ENCODE measurements at regions of chr17 and their contacts with region 1.

Region 1: DNA sequence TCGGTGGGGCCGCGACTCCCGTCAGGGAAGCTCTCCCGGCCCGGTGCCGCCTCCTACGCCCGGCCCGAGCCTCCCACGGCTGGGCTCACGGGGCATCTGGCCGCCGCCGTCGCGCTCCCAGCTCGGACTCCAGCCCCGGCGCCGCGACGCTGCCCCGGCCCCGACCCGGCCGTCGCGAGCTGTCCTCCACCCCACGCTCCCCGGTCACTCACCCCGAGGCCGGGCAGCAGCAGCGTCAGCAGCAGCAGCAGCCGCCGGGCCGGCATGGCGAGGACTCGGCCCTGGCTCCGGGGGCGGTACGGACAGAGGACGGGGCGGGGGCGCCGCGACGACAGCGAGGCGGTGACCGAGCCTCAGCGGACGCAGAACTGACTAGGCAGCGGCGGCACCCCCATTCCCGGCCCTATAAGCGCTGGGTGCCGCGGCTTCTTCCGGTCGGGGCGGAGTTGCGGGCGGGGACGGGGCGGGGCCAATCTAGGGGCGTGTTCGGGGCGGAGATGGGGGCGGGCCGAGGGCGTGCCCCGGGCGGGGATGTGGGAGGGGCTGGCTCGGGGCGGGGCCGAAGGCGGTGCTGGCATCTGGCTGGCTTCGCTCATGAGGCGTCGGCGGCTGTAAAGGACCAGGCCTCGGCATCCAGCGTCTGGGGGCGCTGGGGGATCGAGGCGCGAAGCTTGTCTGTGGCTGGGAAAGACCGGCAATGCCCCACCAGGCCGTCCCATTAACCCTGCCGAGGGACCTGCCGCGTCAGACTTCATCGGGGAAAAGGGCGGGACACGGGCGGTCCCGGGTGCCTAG is at the start of gene ERN1:
- DNase-seq: peak; percentile 87 to 95 (median 88)
- H3K4me3 ChIP-seq: peak within 1 kb of the TSS; percentile 92
- H3K4me3 Mint-ChIP-seq: peak within 1 kb of the TSS; percentile 91 to 98 (median 97)
- H3K27ac ChIP-seq: peak within 1 kb of the TSS; percentile 82
- H3K27ac Mint-ChIP-seq: peak within 1 kb of the TSS; percentile 92 to 98 (median 98)
- H3K4me1 ChIP-seq: peaks cover 32% of the 10 kb centered on the region
- H3K4me1 Mint-ChIP-seq: peaks cover 48 to 63% (median 59%) of the 10 kb centered on the region in 3 donors
- H3K27me3 ChIP-seq: no peaks in the 10 kb centered on the region
- H3K27me3 Mint-ChIP-seq: no peaks in the 10 kb centered on the region
- total RNA-seq, gene ERN1: 24.7 to 25.5 TPM

Region 2: DNA sequence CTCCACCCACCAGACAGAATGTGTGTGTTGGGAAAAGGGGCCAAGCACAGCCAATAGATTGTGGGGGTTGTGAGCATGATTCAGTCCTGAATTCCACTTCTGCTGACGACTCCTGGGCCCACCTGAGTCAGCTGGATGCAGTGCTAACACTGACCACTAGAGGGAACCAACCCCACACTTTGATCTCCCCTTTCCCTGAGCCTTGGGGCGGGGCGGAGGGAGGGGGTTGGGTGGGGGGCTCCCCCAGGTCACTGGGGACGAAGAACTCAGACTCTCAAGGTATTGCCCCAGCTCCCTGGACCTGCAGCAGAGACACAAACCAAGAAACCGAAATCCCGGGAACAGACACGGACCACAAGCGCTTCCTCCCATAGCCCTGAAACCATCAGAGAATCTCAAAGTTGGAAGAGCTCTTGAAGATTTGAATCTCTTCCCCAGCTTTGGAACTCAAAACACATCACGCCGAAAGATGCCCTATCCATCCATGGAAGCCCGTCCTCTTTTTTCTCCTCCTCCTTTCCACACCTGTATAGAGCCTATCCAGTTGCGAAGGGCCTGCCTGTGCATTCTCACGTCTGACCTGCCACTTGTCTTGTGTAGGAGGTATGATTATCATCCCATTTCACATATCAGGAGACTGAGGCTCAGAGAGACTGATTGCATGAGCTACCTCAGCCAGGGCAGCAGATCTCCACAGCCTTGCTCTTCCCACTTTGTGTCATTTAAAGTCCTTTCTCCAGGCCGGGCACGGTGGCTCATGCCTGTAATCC is 218.1 kb before region 1 on chr17:
- CTCF ChIA-PET with region 1: interaction called, 35 read pairs
- POLR2A ChIA-PET with region 1: no interaction called
- DNase-seq: peak; percentile 51 to 75 (median 58)
- H3K4me3 ChIP-seq: no peak overlapping the region
- H3K4me3 Mint-ChIP-seq: no peak overlapping the region
- H3K27ac ChIP-seq: no peak overlapping the region
- H3K27ac Mint-ChIP-seq: peak overlapping the region in 2 of 8 donors; percentile 17 to 47
- H3K4me1 ChIP-seq: no peaks in the 10 kb centered on the region
- H3K4me1 Mint-ChIP-seq: peaks cover 0 to 2% (median 0%) of the 10 kb centered on the region in 3 donors
- H3K27me3 ChIP-seq: no peaks in the 10 kb centered on the region
- H3K27me3 Mint-ChIP-seq: peaks cover 0 to 1% of the 10 kb centered on the region in 2 donors

Region 3: GRCh38 chr17:63946440-63947367 is 183.3 kb before region 1 on chr17:
- CTCF ChIA-PET with region 1: interaction called, 10 read pairs
- POLR2A ChIA-PET with region 1: no interaction called
- DNase-seq: peak; percentile 25 to 67 (median 63)
- H3K4me3 ChIP-seq: peak overlapping the region; percentile 39
- H3K4me3 Mint-ChIP-seq: peak overlapping the region; percentile 31 to 87 (median 83)
- H3K27ac ChIP-seq: no peak overlapping the region
- H3K27ac Mint-ChIP-seq: peak overlapping the region in 6 of 8 donors; percentile 32 to 75 (median 62)
- H3K4me1 ChIP-seq: peaks cover 23% of the 10 kb centered on the region
- H3K4me1 Mint-ChIP-seq: peaks cover 15 to 31% (median 22%) of the 10 kb centered on the region in 3 donors
- H3K27me3 ChIP-seq: no peaks in the 10 kb centered on the region
- H3K27me3 Mint-ChIP-seq: no peaks in the 10 kb centered on the region

Region 4: DNA sequence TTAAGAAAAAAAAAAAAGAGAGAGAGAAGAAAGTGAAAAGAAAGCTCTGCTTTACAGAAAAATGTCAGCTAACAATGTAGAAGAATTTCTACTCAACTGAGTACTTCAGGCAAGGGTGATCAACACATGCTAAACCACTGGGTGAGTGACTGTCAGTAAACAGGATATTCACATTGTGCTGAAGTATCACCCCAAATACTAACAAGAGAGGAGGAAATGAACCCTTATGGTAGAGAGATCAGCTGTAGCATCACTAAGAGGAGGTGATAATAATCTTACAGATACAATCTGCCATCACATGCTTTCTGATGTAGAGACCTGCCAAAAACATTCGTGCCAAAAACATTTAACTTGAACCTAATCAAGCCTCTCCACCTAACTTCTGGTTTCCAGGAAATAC is 78.8 kb before region 1 on chr17:
- CTCF ChIA-PET with region 1: interaction called, 27 read pairs
- POLR2A ChIA-PET with region 1: interaction called, 18 read pairs
- DNase-seq: peak in 2 of 5 donors; percentile 53 to 66
- H3K4me3 ChIP-seq: peak overlapping the region; percentile 35
- H3K4me3 Mint-ChIP-seq: peak overlapping the region in 6 of 7 donors; percentile 21 to 84 (median 70)
- H3K27ac ChIP-seq: peak overlapping the region; percentile 38
- H3K27ac Mint-ChIP-seq: peak overlapping the region; percentile 61 to 96 (median 92)
- H3K4me1 ChIP-seq: peaks cover 45% of the 10 kb centered on the region
- H3K4me1 Mint-ChIP-seq: peaks cover 47 to 65% (median 60%) of the 10 kb centered on the region in 3 donors
- H3K27me3 ChIP-seq: no peaks in the 10 kb centered on the region
- H3K27me3 Mint-ChIP-seq: no peaks in the 10 kb centered on the region

Region 5: DNA sequence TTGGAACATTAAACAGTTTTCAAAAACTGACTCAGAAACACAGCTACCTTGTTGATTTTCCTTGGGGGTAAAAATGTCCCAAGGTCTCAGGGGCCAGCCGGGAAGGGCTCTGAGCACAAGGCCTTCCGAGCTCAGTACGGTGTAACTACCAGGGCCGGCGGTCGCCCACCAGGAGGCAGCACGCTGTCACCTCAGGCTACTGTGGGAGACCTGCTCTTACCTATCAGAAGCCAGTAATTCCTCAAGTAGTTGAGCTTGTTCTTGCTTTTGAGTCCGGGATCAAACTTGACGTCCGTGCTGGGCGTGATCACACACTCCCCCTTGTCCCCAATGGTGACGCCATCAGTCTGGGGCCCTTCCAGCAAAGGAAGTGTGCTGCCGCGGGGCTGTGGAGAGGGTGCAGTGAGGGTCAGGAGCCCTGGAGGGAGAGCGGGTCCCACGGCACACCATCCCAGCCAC is 66.2 kb before region 1 on chr17:
- CTCF ChIA-PET with region 1: interaction called, 21 read pairs
- POLR2A ChIA-PET with region 1: interaction called, 7 read pairs
- DNase-seq: peak; percentile 27 to 66 (median 52)
- H3K4me3 ChIP-seq: no peak overlapping the region
- H3K4me3 Mint-ChIP-seq: peak overlapping the region in 6 of 7 donors; percentile 86 to 95 (median 93)
- H3K27ac ChIP-seq: no peak overlapping the region
- H3K27ac Mint-ChIP-seq: peak overlapping the region in 7 of 8 donors; percentile 88 to 98 (median 97)
- H3K4me1 ChIP-seq: peaks cover 84% of the 10 kb centered on the region
- H3K4me1 Mint-ChIP-seq: peaks cover 55 to 93% (median 92%) of the 10 kb centered on the region in 3 donors
- H3K27me3 ChIP-seq: no peaks in the 10 kb centered on the region
- H3K27me3 Mint-ChIP-seq: peaks cover 0 to 1% of the 10 kb centered on the region in 2 donors

Region 6: GRCh38 chr17:64145757-64146417 is 15.9 kb after region 1 on chr17:
- CTCF ChIA-PET with region 1: interaction called, 19 read pairs
- POLR2A ChIA-PET with region 1: interaction called, 44 read pairs
- DNase-seq: peak; percentile 89 to 98 (median 95)
- H3K4me3 ChIP-seq: peak overlapping the region; percentile 86
- H3K4me3 Mint-ChIP-seq: no peak overlapping the region
- H3K27ac ChIP-seq: peak overlapping the region; percentile 83
- H3K27ac Mint-ChIP-seq: no peak overlapping the region
- H3K4me1 ChIP-seq: peaks cover 25% of the 10 kb centered on the region
- H3K4me1 Mint-ChIP-seq: peaks cover 20 to 26% (median 26%) of the 10 kb centered on the region in 3 donors
- H3K27me3 ChIP-seq: no peaks in the 10 kb centered on the region
- H3K27me3 Mint-ChIP-seq: no peaks in the 10 kb centered on the region

Measured in CD8-positive, alpha-beta memory T cell (primary cell).